Aorta (tissue), 5 donors: ENCODE measurements at regions of chr4 and their contacts with region 1.

Region 1: DNA sequence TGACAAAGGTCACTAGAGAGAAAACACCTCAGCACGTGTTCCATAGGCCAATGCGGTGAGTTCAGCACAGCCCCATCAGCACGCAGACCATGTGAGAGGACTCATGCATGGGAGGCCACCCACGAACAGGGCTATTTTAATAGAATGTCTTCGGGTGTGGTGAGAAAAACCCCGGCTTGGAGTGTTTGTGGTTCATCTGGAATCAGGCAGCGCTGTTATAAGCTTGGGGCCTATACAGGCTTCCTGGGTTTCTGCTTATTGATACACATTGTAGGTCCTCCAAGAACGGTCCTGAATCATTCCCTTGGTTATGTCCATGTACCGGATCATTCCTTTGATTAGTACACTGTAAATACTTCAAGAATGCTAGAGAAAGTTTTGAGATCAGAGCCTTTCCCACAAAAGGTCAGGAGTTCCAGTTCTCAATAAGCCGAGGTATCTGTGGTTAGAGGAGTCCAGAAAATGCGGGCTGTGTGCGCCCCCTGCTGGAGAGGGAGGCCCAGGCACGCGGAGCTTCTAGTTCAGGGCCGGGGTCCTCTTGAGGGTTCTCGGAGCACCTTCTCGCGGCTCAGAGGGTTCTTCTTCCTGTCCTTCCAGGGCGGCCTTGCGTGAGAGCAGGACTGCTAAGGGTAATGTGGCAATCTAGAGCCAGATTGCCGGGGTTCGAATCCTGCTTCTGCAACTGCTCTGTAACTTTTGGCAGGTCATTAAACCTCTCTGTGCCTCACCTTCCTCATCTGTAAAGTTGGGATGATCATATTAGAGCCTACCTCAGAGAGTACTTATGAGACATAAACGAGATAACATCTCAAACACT is 51.8 kb downstream of the TLR10 start:
- DNase-seq: peak; percentile 89 to 94
- ATAC-seq: peak; percentile 90
- H3K4me3 ChIP-seq: no peak overlapping the region
- H3K27ac ChIP-seq: no peak overlapping the region
- H3K4me1 ChIP-seq: no peaks in the 10 kb centered on the region
- H3K27me3 ChIP-seq: no peaks in the 10 kb centered on the region

Region 2: DNA sequence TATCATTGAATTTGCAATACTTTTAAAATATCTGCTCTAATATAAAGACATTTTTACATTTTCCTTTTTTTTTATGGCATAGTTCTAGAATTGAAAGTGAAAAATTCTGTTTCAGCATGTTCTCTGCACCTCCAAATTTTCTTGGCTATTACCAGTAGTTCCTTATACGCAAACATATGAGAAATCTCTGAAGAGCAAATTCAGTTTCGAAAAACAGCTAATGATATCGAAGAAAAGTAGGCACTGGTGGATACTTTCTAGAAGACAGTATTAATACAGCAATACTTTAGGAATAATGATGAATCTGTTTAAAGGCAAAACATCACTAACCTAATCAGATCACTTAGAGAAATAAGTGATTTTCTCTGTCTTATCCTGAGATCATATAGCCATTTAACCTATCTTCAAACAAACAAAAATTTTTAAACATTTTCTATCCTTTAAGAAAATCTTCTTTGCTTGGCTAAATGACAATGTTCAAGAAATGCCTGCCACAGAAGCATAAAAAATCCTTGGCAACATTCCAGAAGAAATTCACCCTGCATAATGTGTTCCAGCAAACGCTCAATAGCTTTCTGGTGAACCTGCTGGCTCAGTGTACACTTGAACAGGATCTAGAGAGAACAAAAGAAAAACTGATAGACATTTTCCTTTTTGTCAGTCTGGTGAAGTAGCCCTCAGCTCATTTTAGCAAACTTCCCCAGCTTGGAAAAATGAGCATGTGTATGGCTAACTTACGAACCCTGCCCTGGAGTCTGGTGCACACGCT is 118.2 kb before region 1 on chr4:
- intact Hi-C with region 1: no loop called
- DNase-seq: no peak
- ATAC-seq: no peak
- H3K4me3 ChIP-seq: no peak overlapping the region
- H3K27ac ChIP-seq: no peak overlapping the region
- H3K4me1 ChIP-seq: peaks cover 0 to 8% of the 10 kb centered on the region in 2 donors
- H3K27me3 ChIP-seq: no peaks in the 10 kb centered on the region

Region 3: DNA sequence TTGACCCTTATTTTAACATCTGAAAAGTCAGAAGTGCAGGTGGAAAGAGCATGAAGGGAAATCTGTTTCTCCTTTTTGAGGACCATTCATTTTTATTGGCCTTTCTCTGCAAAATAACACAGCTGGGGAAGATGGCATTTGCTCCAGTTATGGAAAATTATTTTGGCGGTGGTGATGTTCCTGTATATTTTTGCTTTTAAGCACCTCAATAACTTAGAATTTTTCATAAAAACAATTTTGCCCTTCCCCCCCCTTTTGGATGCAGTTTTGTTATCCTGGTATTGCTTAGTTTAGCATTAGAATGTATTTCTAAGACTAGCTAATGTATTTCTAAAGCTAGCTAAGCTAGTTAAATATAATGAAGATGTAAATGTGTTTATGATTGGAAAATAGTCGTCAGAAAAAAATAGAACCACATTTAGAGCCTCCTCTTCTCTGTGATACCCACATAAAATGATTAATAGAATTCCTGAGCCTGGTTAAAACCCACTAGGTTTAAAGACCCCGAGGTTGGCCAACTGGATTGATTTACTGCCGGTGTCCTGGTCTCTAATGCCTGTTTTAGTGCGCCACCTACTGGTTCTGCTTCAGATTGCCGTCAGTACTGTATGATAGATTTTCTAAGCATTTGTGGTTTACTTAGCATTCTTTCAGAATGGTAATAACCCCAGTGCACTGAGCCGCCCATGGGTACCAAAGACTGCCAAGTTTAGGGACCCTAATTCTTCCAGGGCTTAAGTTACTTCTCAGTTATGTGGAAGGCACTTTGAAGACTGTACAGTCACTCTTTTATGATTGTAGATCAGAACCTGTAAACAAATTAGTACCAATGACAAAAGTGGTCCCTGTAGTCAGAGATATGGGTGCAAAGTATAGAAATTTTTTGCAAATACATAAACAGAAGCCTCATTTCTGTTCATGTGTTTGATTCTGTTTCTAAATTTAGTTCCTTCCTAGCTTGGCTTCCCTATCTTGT is 55.6 kb before region 1 on chr4:
- intact Hi-C with region 1: loop called in 1 of 2 experiments (anchors 10 kb)
- DNase-seq: peak; percentile 80 to 83
- ATAC-seq: peak; percentile 71
- H3K4me3 ChIP-seq: no peak overlapping the region
- H3K27ac ChIP-seq: no peak overlapping the region
- H3K4me1 ChIP-seq: peaks cover 3 to 5% of the 10 kb centered on the region in 2 donors
- H3K27me3 ChIP-seq: no peaks in the 10 kb centered on the region

Region 4: GRCh38 chr4:38821739-38822138 is 90.7 kb after region 1 on chr4:
- intact Hi-C with region 1: no loop called
- DNase-seq: no peak
- ATAC-seq: no peak
- H3K4me3 ChIP-seq: no peak overlapping the region
- H3K27ac ChIP-seq: no peak overlapping the region
- H3K4me1 ChIP-seq: no peaks in the 10 kb centered on the region
- H3K27me3 ChIP-seq: no peaks in the 10 kb centered on the region

Region 5: GRCh38 chr4:38930204-38930603 is 199.2 kb after region 1 on chr4:
- intact Hi-C with region 1: no loop called
- DNase-seq: no peak
- ATAC-seq: no peak
- H3K4me3 ChIP-seq: no peak overlapping the region
- H3K27ac ChIP-seq: no peak overlapping the region
- H3K4me1 ChIP-seq: no peaks in the 10 kb centered on the region
- H3K27me3 ChIP-seq: no peaks in the 10 kb centered on the region

Region 6: DNA sequence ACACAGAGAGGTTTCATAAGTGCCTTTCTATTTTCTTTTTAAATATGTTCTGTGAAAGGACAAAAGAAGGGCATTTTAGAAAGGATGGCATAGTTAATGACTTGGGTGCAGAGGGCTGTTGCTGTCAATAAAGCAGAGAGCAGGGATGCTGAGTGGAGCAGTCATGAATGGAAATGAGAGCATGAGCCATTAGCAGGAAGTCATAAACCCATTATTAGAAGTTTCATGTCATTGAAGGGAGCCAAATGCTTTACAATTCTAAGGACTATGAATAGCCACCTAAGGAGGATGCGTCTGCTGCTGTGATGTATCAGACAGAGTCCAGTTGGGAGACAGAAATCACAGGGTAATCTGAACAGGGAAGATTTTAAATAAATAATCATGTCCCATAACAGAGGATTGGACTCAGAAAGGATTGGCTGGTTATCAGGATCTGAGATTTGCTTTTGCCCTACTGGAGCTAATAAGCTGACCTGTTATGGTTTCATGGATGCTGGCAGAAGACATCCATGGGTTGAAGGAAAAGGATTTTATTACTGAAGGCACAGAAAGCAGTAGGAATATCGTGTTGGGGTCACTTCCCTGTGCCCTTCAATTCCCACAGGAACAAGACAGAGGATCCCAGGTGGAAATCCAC is 403.8 kb after region 1 on chr4:
- intact Hi-C with region 1: no loop called
- DNase-seq: no peak
- ATAC-seq: no peak
- H3K4me3 ChIP-seq: no peak overlapping the region
- H3K27ac ChIP-seq: no peak overlapping the region
- H3K4me1 ChIP-seq: no peaks in the 10 kb centered on the region
- H3K27me3 ChIP-seq: no peaks in the 10 kb centered on the region